Thyroid gland (tissue), 4 donors: ENCODE measurements at regions of chr13 and their contacts with region 1.

Region 1: DNA sequence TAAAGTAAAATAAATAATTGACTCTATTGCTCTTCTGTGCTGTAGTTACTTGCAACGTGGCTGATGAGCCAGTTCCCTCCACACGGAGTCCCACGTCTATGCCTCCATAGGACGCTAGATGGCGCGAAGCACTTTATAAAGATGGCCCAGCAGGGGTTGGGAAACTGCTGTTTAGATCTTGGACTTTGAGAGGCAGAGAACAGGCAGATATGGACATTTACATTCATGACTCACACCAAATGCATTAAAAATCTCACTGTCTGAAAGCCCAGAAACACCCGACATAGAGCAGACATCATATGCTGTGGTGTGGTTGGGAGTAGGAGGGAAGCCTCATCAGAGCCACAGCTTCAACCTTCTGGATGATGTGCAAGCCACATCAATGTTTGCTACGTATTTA is 643.1 kb upstream of the ARGLU1 start:
- DNase-seq: peak; percentile 63 to 70
- H3K4me3 ChIP-seq: no peak overlapping the region
- H3K27ac ChIP-seq: no peak overlapping the region
- H3K4me1 ChIP-seq: peaks cover 0 to 5% of the 10 kb centered on the region in 2 donors
- H3K27me3 ChIP-seq: no peaks in the 10 kb centered on the region
- CTCF ChIP-seq: peak; percentile 32 to 89 (median 70)
- POLR2A ChIP-seq: no peak

Region 2: DNA sequence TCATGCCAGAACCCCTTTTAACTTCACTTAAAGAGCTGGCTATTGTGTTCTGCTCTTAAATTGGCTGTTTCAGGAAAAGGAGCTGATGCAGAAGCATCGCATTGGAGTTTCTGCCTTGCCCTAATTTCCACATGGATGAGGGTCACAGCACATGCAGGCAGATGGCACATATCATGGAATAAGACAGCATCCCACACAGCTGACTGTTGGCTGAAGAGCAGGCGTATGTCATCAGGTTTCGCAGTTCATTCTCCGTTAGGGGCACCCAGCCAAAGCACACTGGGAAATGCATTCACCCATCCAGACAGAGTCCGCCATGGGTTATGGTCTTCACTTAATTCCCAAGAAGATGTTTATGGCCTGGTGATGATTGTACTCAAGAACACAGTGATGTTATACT is 431.8 kb after region 1 on chr13:
- intact Hi-C with region 1: loop called (anchors 10 kb)
- DNase-seq: no peak
- H3K4me3 ChIP-seq: no peak overlapping the region
- H3K27ac ChIP-seq: no peak overlapping the region
- H3K4me1 ChIP-seq: no peaks in the 10 kb centered on the region
- H3K27me3 ChIP-seq: no peaks in the 10 kb centered on the region
- CTCF ChIP-seq: no peak
- POLR2A ChIP-seq: no peak

Region 3: DNA sequence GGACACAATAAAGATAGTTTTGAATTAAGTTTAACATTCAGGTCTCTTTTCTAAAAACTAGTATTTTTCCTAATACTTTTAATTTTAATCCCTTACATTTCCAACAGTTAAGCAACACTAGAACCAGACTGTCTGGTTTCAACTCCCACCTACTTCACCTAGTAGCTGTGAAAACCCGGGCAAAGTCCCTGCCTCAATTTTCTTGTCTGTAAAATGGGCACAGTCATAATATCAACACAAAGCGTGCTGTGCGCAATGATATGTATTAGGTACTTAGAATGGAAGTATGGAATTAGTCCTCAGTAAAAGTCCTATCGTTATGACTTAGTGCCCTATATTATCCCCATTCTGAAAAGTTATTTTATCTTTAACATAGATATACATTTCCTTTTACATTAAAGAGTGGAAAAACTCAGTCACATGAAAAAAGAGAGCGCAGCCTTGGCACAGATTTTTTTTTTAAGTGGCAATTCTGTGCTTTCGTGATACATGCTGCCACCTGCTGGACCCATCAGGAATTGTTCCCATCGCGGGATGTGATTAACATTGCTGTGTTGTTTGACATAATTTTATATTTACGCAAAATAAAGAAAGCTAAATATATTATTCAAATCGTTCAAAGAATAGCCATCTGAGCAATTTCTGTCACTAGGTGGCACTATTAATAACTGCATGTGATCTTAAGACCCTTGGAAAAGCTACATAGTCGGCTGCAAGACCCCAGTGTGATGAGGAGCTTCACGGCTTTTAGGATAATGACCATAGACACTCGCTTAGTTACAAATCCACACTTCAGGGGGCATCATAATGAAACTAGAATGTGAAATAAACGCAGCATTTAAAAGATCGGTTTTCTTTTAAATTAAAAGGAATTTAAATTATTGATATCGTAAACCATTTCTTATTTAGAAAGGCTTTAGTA is 944.4 kb after region 1 on chr13:
- intact Hi-C with region 1: loop called (anchors 10 kb)
- DNase-seq: peak; percentile 67 to 72
- H3K4me3 ChIP-seq: no peak overlapping the region
- H3K27ac ChIP-seq: no peak overlapping the region
- H3K4me1 ChIP-seq: no peaks in the 10 kb centered on the region
- H3K27me3 ChIP-seq: no peaks in the 10 kb centered on the region
- CTCF ChIP-seq: peak; percentile 61 to 93 (median 71)
- POLR2A ChIP-seq: no peak